ENCODE measurements at regions of chr14 and their contacts with region 1.

Region 1: DNA sequence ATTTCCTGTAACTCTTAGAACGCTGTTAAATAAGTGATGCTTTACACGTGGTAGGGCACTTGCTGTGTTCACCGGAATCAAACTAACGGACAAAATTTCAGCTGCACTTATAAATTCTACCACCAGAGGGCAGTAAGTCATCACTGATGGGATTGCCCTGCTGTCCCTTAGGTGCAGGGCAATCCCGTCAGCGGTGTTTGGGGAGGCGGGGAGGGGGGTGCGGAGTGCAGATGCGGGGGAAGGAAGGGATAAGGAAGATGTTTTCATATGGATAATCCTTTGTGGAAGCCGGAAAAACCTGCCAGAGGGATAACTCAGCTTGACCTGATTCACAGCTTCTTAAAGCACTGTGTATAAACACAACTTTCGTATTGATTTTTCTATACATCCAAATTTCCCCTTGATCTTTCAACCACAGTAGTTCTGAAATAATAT is 21.7 kb upstream of the SLC10A1 start:
- DNase-seq: peak; percentile 67
- H3K4me3 Mint-ChIP-seq: no peak overlapping the region
- H3K27ac Mint-ChIP-seq: no peak overlapping the region
- H3K4me1 Mint-ChIP-seq: peaks cover 2% of the 10 kb centered on the region
- H3K27me3 Mint-ChIP-seq: peaks cover 2% of the 10 kb centered on the region

Region 2: DNA sequence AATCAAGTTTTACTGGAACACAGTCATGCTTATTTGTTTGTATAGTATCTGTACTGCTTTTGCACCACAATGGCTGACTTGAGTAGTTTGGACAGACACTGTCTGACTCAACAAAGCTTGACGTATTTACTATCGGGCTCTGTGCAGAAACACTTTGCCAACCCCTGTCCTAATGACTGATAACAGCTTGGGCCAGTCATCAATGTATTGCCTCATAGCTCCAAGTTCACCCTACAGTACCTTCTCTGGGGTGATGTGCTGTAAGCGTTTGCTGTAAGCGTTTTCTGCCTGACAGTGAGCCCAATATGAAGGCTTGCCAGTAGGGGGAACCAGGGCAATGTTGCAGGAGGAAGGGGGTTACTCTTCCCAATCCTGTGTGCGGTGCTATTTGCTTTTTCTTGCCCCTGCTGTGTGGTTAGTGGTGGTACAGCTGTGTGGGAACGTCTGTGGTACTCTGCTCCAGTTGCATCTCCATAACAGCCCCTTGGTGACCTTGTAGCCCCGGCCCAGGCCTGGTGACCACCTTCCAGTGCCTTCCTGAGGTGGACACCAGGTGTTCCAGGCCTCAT is 238.7 kb before region 1 on chr14:
- CTCF ChIA-PET with region 1: interaction called, 4 read pairs
- intact Hi-C with region 1: loop called (anchors 1 kb)
- DNase-seq: peak; percentile 47
- H3K4me3 Mint-ChIP-seq: no peak overlapping the region
- H3K27ac Mint-ChIP-seq: no peak overlapping the region
- H3K4me1 Mint-ChIP-seq: no peaks in the 10 kb centered on the region
- H3K27me3 Mint-ChIP-seq: peaks cover 8% of the 10 kb centered on the region

Region 3: DNA sequence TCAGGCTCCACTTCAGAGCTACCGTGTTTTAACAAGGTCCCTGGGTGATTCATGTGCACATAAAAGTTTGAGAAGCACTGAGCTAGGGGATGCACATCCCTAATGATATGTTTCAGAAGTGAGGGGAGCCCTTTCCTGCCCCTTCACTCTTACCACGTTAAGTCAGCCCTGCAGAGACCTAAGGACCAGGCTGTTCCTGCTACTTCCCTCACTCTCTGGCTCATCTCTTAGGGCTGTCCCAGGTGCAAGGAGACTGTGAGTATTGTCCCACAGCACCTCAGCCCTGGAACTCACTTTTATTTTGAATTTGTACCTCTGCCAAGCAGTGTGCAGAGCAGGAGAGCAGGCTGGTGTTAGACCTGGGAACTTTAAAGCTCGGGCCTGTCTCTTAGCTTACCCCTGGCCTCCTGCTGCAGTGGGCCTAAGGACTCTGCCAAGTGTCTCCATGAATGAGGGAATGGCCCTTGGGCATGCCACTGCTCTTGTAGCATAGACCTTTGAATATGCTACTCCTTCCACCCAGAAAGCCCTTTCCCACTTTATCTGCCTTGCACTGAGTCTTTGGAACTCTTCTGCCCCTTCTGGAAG is 218.4 kb before region 1 on chr14:
- CTCF ChIA-PET with region 1: interaction called, 4 read pairs
- intact Hi-C with region 1: loop called (anchors 5 kb)
- DNase-seq: no peak
- H3K4me3 Mint-ChIP-seq: no peak overlapping the region
- H3K27ac Mint-ChIP-seq: no peak overlapping the region
- H3K4me1 Mint-ChIP-seq: peaks cover 5% of the 10 kb centered on the region
- H3K27me3 Mint-ChIP-seq: no peaks in the 10 kb centered on the region

Region 4: DNA sequence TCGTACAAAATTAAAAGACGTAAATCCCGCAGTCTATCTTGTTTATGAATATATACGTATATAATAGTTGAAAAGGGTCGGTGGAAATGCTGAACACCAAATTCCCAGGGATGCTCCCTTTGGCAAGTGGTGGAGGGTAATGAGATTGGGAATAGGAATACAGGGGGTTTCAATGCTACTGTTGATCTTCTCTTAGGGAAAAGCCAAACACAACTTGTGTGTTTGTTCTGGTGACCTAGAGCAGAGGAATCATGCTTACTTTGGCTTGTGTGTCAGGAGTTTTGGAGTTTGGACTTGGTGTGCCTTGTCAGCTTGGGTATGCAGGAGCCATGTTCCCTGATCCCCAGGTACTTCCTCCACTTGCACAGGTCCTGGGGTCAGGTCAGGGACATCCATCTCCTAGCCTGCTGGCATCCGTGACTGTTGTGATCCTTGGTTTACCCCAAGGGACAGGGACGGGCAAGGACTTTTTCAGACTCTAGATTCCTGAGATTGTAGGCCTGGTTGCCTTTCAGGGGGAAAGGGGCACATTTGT is 25.8 kb before region 1 on chr14:
- CTCF ChIA-PET with region 1: no interaction called
- intact Hi-C with region 1: no loop called
- DNase-seq: no peak
- H3K4me3 Mint-ChIP-seq: no peak overlapping the region
- H3K27ac Mint-ChIP-seq: no peak overlapping the region
- H3K4me1 Mint-ChIP-seq: no peaks in the 10 kb centered on the region
- H3K27me3 Mint-ChIP-seq: no peaks in the 10 kb centered on the region

Region 5: DNA sequence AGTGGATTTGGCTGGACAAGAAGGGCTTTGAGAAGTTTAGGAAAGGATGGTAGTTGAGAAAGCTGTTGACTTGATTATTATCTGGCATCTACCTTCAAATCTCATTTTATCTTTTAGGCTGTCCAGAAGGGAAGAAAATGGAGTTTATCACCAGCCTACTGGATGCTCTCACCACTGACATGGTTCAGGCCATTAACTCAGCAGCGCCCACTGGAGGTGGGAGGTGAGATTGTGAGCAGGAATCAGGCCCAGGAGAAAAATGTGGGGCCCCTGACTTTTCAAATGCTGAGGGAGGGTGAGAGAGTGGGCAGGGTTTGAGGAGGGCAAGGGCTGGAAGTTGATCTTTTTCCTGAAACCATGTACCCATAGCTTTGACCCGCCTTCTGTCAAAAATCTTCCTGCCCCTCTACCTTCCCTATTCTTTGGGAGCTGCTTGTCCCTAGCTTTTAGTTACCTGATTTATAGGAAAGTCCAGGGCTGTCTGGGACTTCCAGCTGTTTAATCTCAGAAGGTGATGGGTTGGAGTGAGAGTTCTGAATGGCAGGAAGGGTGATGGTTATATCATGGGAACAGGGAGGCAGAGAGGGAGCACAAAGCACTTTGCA is 194.6 kb after region 1 on chr14:
- CTCF ChIA-PET with region 1: interaction called, 4 read pairs
- intact Hi-C with region 1: loop called (anchors 1 kb)
- DNase-seq: peak; percentile 73
- H3K4me3 Mint-ChIP-seq: no peak overlapping the region
- H3K27ac Mint-ChIP-seq: no peak overlapping the region
- H3K4me1 Mint-ChIP-seq: peaks cover 2% of the 10 kb centered on the region
- H3K27me3 Mint-ChIP-seq: peaks cover 3% of the 10 kb centered on the region

Region 6: GRCh38 chr14:70027785-70028428 is 209.1 kb after region 1 on chr14:
- CTCF ChIA-PET with region 1: interaction called, 64 read pairs
- intact Hi-C with region 1: loop called (anchors 1 kb)
- DNase-seq: peak; percentile 78
- H3K4me3 Mint-ChIP-seq: no peak overlapping the region
- H3K27ac Mint-ChIP-seq: no peak overlapping the region
- H3K4me1 Mint-ChIP-seq: no peaks in the 10 kb centered on the region
- H3K27me3 Mint-ChIP-seq: no peaks in the 10 kb centered on the region

Region 7: GRCh38 chr14:70073924-70074566 is 255.3 kb after region 1 on chr14:
- CTCF ChIA-PET with region 1: interaction called, 24 read pairs
- intact Hi-C with region 1: loop called (anchors 1 kb)
- DNase-seq: peak; percentile 81
- H3K4me3 Mint-ChIP-seq: no peak overlapping the region
- H3K27ac Mint-ChIP-seq: no peak overlapping the region
- H3K4me1 Mint-ChIP-seq: no peaks in the 10 kb centered on the region
- H3K27me3 Mint-ChIP-seq: peaks cover 2% of the 10 kb centered on the region

Measured in activated naive CD4-positive, alpha-beta T cell treated with anti-CD3 and anti-CD28 coated beads for 36 hours (primary cell).